Adrenal gland (tissue), 19 donors: ENCODE measurements at regions of chr9 and their contacts with region 1.

Region 1: DNA sequence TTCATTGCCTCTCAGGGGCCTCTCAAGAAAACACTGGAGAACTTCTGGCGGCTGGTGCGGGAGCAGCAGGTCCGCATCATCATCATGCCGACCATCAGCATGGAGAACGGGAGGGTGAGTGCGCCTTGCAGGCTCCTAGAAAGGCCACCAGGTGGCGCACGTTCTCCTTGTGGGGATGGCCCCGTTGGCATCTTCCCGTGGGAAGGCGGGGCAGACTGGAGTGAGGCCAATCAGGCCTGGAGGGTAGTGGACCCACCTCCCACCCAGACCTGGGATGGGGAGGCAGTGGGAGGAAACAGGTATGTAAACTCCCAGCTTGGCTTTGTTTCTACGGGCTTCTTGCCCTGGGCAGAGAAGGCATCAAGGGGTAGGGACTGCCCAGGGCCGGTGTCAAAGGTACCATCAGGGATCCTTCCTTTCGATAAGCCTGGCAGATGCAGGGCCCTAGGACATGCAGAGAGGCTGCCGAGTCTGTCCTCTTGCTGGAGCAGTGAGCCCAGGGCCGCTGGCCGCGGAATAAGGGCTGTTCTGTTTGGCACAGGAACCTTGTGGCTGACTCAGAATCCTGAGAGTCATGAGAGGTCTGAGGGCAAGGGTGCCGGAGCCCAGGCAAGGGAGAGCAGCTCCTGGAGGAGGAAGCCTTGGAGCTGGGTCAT is 18.9 kb upstream of the SPTLC1 start:
- DNase-seq: peak; percentile 84 to 95 (median 88)
- H3K4me3 ChIP-seq: peak overlapping the region in 1 of 4 donors; percentile 48
- H3K27ac ChIP-seq: peak overlapping the region; percentile 28 to 93 (median 72)
- H3K4me1 ChIP-seq: peaks cover 6 to 8% of the 10 kb centered on the region in 2 donors
- H3K27me3 ChIP-seq: no peaks in the 10 kb centered on the region
- CTCF ChIP-seq: peak; percentile 67 to 97 (median 90)
- POLR2A ChIP-seq: peak in 1 of 2 donors; percentile 38

Region 2: GRCh38 chr9:92325269-92325990 is 191.4 kb after region 1 on chr9 and contains the starts of genes CENPP and NOL8:
- intact Hi-C with region 1: loop called in 1 of 2 experiments (anchors 10 kb)
- DNase-seq: peak; percentile 85 to 92 (median 89)
- H3K4me3 ChIP-seq: peak within 1 kb of the TSS; percentile 36 to 80 (median 70)
- H3K27ac ChIP-seq: peak within 1 kb of the TSS; percentile 42 to 99 (median 90)
- H3K4me1 ChIP-seq: peaks cover 5 to 24% of the 10 kb centered on the region in 2 donors
- H3K27me3 ChIP-seq: no peaks in the 10 kb centered on the region
- CTCF ChIP-seq: no peak
- POLR2A ChIP-seq: peak in 1 of 2 donors; percentile 66
- total RNA-seq, gene CENPP: 1.1 to 14.0 (median 3.7) TPM
- total RNA-seq, gene NOL8: 13.3 to 43.3 (median 31.0) TPM

Region 3: GRCh38 chr9:92438900-92439526 is 304.9 kb after region 1 on chr9:
- intact Hi-C with region 1: loop called in 1 of 2 experiments (anchors 10 kb)
- DNase-seq: no peak
- H3K4me3 ChIP-seq: no peak overlapping the region
- H3K27ac ChIP-seq: no peak overlapping the region
- H3K4me1 ChIP-seq: no peaks in the 10 kb centered on the region
- H3K27me3 ChIP-seq: no peaks in the 10 kb centered on the region
- CTCF ChIP-seq: peak in 5 of 6 experiments; percentile 5 to 56 (median 36)
- POLR2A ChIP-seq: no peak